ENCODE measurements at regions of chr11 and their contacts with region 1.

Region 1: DNA sequence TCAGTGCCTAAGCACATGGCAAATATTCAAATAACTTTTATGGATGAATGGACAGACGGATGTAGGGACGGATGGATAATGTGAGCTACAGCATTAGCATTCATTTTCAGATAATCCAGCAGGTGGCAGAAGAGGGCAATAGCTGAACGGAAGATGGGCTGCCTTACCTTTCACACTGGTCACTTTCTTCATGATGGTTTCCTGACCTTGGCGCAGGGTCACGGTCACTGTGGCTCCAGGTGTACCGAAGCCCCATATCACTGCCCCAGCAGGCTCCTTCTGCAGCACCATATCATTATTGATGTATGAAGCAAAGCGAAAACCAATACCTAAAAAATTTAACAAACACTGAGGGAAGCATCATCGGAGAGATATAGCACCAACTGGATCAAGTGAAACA is 4.3 kb downstream of the SIAE start:
- DNase-seq: peak in 1 of 2 donors; percentile 25
- H3K4me3 ChIP-seq: no peak overlapping the region
- H3K27ac ChIP-seq: no peak overlapping the region
- H3K4me1 ChIP-seq: peaks cover 0 to 11% (median 10%) of the 10 kb centered on the region in 4 donors
- H3K27me3 ChIP-seq: no peaks in the 10 kb centered on the region
- CTCF ChIP-seq: peak; percentile 76 to 86

Region 2: GRCh38 chr11:124865921-124866583 is 196.9 kb after region 1 on chr11:
- intact Hi-C with region 1: loop called (anchors 5 kb)
- DNase-seq: no peak
- H3K4me3 ChIP-seq: peak overlapping the region; percentile 9 to 44
- H3K27ac ChIP-seq: no peak overlapping the region
- H3K4me1 ChIP-seq: peaks cover 0 to 56% (median 43%) of the 10 kb centered on the region in 4 donors
- H3K27me3 ChIP-seq: peaks cover 16 to 94% of the 10 kb centered on the region in 2 donors
- CTCF ChIP-seq: peak; percentile 62 to 82

Measured in tibial artery (tissue), 4 donors.